Gastrocnemius medialis (tissue), 4 donors: ENCODE measurements at regions of chr14 and their contacts with region 1.

Region 1: DNA sequence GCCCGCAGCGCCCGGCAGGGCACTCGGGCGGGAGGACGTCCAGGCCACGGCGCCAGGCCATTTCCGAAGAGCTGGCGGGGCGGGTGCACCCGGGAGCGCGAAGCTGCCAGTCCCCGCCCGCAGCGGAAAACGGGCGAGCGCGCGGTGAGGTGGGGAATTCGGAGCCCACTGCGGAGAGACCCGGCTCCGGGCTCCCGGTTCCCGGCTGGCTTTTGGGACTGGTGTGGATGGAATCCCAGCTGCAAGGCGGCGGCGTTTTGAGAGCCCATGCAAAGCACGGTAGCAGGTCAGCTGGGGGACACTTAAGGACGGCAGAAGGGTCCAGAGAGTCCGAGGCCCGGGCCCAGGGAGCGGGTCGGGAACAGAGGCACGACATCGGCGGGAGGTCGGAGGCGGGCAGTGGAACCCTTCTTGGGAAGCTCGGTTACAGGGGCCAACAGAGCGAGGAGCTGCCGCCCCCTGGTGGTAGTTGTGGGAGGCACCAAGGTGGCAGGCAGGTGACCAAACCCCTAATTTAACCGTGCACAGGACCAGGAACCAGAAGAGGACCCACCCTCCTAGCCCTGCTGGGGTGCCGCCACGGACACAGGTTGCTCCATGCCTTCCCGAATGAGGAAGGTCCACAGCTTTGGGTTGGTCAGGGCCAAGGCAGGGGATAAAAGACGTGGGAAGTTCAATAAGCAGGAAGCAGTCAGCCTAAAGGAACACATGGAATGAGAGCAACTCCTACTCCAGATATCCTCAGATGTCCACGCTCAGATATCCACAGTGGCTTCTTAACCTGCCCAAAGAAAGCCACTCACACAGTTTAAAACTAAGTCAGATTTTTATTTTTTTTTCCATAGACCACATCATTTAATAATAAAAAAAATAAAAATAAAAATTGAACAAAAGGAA is 685 bp upstream of the CDH24 start:
- DNase-seq: peak; percentile 64 to 75
- ATAC-seq: peak; percentile 86 to 89
- H3K4me3 ChIP-seq: peak overlapping the region; percentile 58 to 98 (median 71)
- H3K27ac ChIP-seq: peak overlapping the region in 3 of 4 donors; percentile 2 to 65 (median 35)
- H3K4me1 ChIP-seq: peaks cover 3 to 15% of the 10 kb centered on the region in 2 donors
- H3K27me3 ChIP-seq: no peaks in the 10 kb centered on the region
- CTCF ChIP-seq: peak; percentile 90 to 99 (median 96)
- POLR2A ChIP-seq: no peak

Region 2: DNA sequence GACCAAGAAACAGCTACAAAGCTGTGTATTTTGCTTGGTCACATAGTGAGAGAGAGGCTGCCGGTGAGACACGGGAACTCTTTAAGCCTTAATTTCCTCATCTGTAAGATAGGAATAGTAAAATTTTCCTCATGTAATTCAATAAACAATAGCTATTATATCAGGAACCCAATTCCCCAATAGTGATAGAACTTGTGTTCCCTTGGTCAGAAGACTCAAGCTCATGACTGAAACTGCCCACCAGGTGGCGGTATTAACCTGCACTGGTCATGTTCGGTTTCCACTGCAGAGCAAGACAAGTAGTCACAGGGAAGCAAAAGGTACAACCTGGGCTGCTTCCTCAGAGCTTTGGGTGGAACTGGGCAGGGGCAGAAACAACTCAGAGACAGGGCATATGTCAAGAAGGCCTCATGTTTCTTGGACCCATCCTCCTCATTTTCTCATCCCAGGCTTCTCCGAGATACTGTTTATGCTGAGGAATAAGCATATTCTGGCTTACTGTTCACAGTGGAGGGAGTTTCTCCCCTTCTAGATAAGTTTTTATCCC is 71.4 kb before region 1 on chr14:
- in situ Hi-C with region 1: loop called (anchors 5 kb)
- intact Hi-C with region 1: loop called (anchors 1 kb)
- DNase-seq: peak; percentile 76 to 80
- ATAC-seq: peak; percentile 83 to 84
- H3K4me3 ChIP-seq: no peak overlapping the region
- H3K27ac ChIP-seq: no peak overlapping the region
- H3K4me1 ChIP-seq: peaks cover 3 to 20% of the 10 kb centered on the region in 2 donors
- H3K27me3 ChIP-seq: peaks cover 9 to 18% (median 17%) of the 10 kb centered on the region in 3 donors
- CTCF ChIP-seq: peak; percentile 76 to 94 (median 84)
- POLR2A ChIP-seq: no peak

Region 3: GRCh38 chr14:22994762-22995275 is 63.2 kb before region 1 on chr14:
- in situ Hi-C with region 1: loop called in 3 of 4 experiments (anchors 5 kb)
- intact Hi-C with region 1: no loop called
- DNase-seq: no peak
- ATAC-seq: no peak
- H3K4me3 ChIP-seq: no peak overlapping the region
- H3K27ac ChIP-seq: no peak overlapping the region
- H3K4me1 ChIP-seq: no peaks in the 10 kb centered on the region
- H3K27me3 ChIP-seq: no peaks in the 10 kb centered on the region
- CTCF ChIP-seq: peak in 2 of 5 experiments; percentile 47 to 50
- POLR2A ChIP-seq: no peak

Region 4: DNA sequence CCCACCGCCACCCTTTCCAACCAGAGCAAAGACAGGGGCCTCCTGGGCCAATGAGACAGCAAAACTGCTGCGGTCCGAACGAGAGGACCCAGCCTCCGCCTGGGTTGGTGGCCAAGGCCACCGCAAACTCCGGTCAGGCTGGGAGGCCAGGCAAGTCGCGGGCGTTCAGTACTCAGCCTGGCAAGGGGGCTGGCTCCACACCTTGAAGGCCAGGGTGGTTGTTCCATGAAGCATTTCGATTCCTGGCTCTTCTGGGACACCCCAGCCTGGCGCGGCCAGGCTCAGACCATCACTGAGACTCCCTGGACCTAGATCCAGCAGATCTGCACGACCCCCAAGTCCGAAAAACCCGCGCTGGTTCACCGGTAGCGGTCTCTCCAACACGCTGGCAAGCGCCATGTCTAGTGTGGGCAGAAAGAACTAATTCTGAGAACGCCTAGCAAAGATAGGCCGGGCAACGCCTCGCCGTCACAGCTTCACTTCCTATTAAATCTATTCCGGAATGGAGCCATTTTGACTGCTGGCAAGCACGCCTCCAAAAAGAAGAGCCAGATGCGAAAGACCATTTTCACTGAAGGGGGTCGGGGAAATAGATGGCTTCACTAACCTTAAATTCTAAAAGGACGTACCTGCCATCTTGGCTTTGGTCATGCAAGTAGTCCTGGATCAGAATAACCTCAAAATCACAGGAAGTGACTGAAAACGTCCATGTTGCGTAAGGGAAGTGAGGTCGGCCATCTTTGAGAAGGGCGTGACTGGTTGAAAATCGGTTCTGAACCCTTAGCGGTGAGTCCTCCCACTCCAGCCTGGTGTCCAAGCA is 23.3 kb before region 1 on chr14 and contains the start of gene PSMB5:
- in situ Hi-C with region 1: no loop called
- intact Hi-C with region 1: loop called (anchors 1 kb)
- DNase-seq: peak; percentile 89 to 93
- ATAC-seq: peak; percentile 98 to 99
- H3K4me3 ChIP-seq: peak within 1 kb of the TSS; percentile 74 to 97 (median 90)
- H3K27ac ChIP-seq: peak within 1 kb of the TSS; percentile 88 to 99 (median 98)
- H3K4me1 ChIP-seq: peaks cover 12 to 22% of the 10 kb centered on the region in 2 donors
- H3K27me3 ChIP-seq: no peaks in the 10 kb centered on the region
- CTCF ChIP-seq: peak in 1 of 5 experiments; percentile 29
- POLR2A ChIP-seq: peak; percentile 81 to 82
- total RNA-seq, gene PSMB5: 304 to 543 (median 486) TPM